ENCODE measurements at regions of chr18 and their contacts with region 1.

Region 1: DNA sequence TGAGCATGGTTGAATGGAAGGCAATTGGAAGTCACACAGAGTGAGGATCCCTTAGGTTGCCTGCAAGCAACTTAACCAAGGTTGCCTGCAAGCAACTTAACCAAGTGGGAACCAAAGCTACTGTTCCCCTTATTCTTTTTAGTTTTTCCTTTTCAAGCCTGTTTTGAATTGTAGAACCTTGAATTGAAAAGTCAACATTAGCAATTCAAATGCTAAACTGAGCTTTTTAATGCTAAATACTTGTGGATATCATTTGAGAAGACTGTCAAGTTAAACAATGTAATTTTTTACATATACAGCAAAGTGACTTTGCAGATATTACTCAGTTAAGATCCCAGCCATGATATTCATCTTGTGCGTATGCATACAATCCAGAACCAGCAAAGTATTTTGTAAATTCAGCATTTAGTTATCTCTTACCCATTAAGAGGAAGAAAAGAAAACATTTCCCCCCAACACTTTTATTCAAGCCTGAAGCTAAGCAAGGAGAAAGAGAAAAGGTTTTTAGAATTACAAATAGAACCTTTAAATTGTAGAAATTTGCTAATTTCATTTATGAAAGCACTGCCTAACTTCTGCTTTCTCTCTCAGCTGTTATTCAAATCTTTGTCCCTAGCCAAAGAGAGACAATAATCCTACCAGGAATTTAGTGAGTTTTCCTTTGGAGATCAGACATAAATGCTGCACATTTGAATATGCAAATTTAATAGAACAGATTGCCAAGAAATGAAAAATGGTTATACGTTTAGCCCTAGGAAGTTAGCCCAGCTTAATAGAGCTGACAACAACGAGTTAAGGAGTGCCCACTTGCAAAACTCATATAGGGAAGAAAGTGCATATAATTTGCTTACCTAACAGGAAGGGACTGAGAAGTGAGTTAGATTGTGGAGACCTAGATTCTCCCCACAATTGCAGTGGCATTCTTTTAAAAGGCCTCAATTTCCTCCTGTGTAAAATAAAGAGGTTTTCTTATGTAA is 643.2 kb upstream of the PIK3C3 start:
- DNase-seq: no peak
- ATAC-seq: no peak
- H3K4me3 ChIP-seq: no peak overlapping the region
- H3K27ac ChIP-seq: no peak overlapping the region
- H3K4me1 ChIP-seq: no peaks in the 10 kb centered on the region
- H3K27me3 ChIP-seq: no peaks in the 10 kb centered on the region

Region 2: GRCh38 chr18:40738321-40738880 is 573.5 kb before region 1 on chr18:
- intact Hi-C with region 1: no loop called
- DNase-seq: no peak
- ATAC-seq: no peak
- H3K4me3 ChIP-seq: no peak overlapping the region
- H3K27ac ChIP-seq: no peak overlapping the region
- H3K4me1 ChIP-seq: no peaks in the 10 kb centered on the region
- H3K27me3 ChIP-seq: no peaks in the 10 kb centered on the region

Region 3: GRCh38 chr18:41226186-41226585 is 85.7 kb before region 1 on chr18:
- intact Hi-C with region 1: loop called in 1 of 2 experiments (anchors 10 kb)
- DNase-seq: no peak
- ATAC-seq: no peak
- H3K4me3 ChIP-seq: no peak overlapping the region
- H3K27ac ChIP-seq: no peak overlapping the region
- H3K4me1 ChIP-seq: no peaks in the 10 kb centered on the region
- H3K27me3 ChIP-seq: no peaks in the 10 kb centered on the region

Region 4: DNA sequence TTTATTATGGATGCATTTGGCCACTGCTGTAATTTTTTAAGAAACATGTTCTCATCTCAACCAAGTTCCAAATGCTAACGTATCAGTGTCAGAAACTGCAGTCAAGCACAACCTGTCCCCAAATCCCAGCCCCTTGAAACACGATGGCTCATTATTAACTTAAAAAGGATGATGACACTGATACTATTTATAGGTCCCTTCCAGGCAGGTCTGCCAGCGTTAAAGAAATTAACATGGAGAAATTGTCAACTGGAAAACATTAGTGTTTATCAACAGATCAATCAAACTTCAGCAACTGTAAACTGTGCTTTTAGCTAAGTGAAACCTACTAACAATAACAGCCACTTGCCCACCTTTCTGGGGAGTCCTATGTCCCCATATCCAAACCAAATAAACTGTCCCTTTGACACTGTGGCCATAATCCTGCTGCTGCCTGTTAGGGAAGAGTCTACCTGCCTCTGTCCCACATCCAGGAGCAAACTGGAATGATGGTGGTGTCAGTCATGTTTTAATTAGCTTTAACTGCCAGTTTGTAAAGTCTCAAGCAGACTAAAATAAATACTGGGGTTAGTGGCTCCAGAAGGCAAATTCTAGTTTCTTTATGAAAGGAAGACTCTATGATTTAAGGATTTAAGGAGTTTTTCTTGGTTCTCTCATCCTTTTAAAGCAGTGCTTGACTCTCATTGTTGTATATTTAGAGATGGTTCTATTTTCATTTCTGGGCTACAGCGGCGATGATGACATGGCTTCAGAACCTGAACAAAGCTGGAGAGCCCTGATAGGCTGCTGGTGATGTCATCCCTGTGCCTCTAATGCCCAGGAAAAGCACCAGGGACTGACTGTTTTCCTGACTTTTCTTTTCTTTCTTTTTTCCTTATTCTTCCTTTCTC is 59.5 kb after region 1 on chr18:
- intact Hi-C with region 1: no loop called
- DNase-seq: no peak
- ATAC-seq: no peak
- H3K4me3 ChIP-seq: no peak overlapping the region
- H3K27ac ChIP-seq: no peak overlapping the region
- H3K4me1 ChIP-seq: no peaks in the 10 kb centered on the region
- H3K27me3 ChIP-seq: peaks cover 0 to 2% of the 10 kb centered on the region in 2 donors

Measured in aorta (tissue), 5 donors.